Ovary (tissue), 10 donors: ENCODE measurements at regions of chr5 and their contacts with region 1.

Region 1: DNA sequence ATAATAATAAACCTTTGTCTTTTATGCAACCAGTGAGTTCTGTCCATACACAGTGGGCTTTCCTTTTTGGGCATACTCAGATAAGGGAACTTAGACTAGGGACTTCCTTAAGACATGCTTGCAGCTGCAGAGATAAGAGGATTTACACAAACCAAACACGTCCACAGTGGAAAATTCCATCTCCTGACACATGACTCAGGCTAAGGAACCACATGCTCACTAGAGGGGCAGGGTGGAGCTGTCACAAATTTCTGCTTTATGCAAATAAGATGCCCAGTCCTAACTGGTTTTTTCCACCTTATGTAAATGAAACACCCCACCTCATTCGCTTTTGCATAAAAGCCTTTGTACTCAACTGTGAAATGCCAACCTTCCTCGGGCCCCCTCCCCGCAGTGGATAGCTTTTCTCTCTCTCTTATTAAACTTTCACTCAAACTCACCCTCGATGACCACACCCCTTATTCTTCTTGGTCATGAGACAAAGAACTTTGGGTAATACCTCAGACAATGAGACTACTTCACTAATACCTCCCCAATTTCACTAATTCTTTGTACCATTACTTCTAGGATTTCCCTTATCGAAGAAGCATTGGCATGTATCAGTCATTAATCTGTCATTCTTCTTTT is 170.3 kb upstream of the FTMT start:
- DNase-seq: no peak
- H3K4me3 ChIP-seq: no peak overlapping the region
- H3K27ac ChIP-seq: no peak overlapping the region
- H3K4me1 ChIP-seq: no peaks in the 10 kb centered on the region
- H3K27me3 ChIP-seq: no peaks in the 10 kb centered on the region
- CTCF ChIP-seq: no peak
- EP300 ChIP-seq: no peak
- POLR2A ChIP-seq: no peak

Region 2: DNA sequence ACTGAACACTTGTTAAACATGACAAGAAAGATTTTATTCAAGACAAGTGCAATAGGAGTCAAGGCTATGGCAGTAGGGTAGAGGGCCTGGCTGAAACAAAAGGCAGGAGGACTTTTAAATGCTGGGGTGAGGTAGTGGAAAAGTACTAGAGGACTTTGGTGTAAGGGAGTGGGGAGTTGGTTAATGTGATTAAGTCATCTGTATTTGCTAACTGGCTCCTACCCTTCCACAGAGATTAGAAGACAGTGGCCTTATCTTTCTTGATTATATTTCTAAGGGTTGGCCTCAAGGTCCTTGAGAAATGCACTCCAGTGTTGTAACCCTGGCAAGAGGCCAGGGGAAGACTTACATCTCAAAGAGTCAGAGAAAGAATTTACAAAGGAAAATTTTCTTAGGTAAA is 10.1 kb after region 1 on chr5:
- intact Hi-C with region 1: loop called in 1 of 4 experiments (anchors 1 kb)
- DNase-seq: no peak
- H3K4me3 ChIP-seq: no peak overlapping the region
- H3K27ac ChIP-seq: no peak overlapping the region
- H3K4me1 ChIP-seq: no peaks in the 10 kb centered on the region
- H3K27me3 ChIP-seq: no peaks in the 10 kb centered on the region
- CTCF ChIP-seq: no peak
- EP300 ChIP-seq: no peak
- POLR2A ChIP-seq: no peak

Region 3: GRCh38 chr5:121915765-121916164 is 234.4 kb after region 1 on chr5:
- intact Hi-C with region 1: no loop called
- DNase-seq: no peak
- H3K4me3 ChIP-seq: no peak overlapping the region
- H3K27ac ChIP-seq: no peak overlapping the region
- H3K4me1 ChIP-seq: no peaks in the 10 kb centered on the region
- H3K27me3 ChIP-seq: no peaks in the 10 kb centered on the region
- CTCF ChIP-seq: no peak
- EP300 ChIP-seq: no peak
- POLR2A ChIP-seq: no peak